Activated naive CD4-positive, alpha-beta T cell treated with anti-CD3 and anti-CD28 coated beads for 36 hours (primary cell): ENCODE measurements at regions of chr3 and their contacts with region 1.

Region 1: DNA sequence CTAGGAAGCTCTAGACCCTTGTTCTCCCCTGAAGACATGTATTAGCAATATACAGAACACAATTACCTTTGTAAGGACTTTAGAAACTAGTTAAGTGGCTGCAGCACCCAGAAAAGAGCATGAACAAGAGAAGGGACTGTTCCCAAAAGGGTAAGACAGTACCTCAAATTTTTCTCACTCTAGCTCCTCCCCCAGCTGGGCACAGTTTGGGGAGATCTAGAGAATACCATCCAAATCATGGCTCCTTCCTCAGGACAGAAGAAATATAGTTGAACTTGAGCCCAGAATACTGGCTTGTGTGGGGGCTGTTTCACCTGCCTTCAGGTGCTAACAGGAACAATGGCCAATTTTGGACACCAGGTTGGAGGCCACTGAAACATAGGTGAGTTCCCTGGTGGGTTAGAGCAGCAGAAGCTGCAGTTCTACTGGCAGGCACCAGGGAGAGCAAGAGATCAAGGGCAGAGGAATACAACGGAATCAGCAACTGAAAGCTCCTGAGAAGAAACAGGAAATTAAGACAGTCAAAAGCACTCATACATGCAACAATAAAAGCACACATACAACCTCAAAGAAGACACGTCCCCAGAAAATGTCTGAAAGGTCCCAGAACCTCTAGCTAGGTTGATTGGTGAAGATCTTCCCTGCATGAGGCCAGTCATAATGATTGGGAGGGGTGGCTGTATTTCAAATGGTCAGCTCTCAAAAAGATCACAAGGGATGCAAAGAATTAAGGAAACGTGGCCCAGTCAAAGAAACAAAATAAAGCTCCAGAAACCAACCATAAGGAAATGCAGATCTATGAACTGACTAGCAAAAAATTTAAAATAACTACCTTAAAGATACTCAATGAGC is 104.9 kb upstream of the ASB14 start:
- DNase-seq: peak; percentile 77
- H3K4me3 Mint-ChIP-seq: no peak overlapping the region
- H3K27ac Mint-ChIP-seq: peak overlapping the region; percentile 20
- H3K4me1 Mint-ChIP-seq: peaks cover 11% of the 10 kb centered on the region
- H3K27me3 Mint-ChIP-seq: no peaks in the 10 kb centered on the region

Region 2: DNA sequence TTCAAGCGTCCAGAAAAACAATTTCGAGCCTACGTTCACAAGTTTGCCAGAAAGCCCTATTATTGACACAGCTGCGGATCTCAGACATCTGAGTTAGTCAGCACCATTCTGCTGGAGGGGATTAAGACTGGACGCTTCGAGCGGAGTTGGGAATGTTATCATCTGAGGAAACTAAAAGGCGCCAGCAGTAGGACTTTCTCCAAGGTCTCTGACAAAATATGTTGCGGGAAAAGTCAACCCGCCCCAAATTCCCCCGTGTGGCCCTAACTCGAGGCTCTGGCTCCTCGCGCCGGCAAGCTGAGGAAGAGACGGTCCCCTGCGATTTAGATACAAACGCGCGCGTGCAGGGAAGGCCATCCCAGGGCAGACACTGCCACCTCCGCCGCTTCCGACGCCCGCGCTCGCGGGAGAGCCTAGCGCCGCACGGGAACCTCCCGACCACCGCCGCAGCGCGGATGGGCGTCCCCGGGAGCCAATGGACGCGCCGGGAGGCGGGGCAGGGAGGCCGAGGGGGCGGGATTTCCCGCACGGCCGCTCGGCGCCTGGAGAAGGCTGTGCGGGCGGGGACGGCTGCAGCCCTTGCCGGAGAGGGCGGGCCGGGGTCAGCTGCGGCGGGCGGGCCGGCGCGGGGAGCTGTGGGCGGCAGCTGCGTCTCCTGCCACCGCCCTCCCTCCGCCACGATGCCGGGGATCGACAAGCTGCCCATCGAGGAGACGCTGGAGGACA is 170.0 kb before region 1 on chr3 and contains the start of gene APPL1:
- CTCF ChIA-PET with region 1: no interaction called
- intact Hi-C with region 1: loop called (anchors 2 kb)
- DNase-seq: peak; percentile 93
- H3K4me3 Mint-ChIP-seq: peak within 1 kb of the TSS; percentile 88
- H3K27ac Mint-ChIP-seq: peak within 1 kb of the TSS; percentile 63
- H3K4me1 Mint-ChIP-seq: peaks cover 26% of the 10 kb centered on the region
- H3K27me3 Mint-ChIP-seq: no peaks in the 10 kb centered on the region
- total RNA-seq, gene APPL1: 30.8 to 35.1 TPM

Region 3: GRCh38 chr3:57582474-57583168 is 185.2 kb after region 1 on chr3:
- CTCF ChIA-PET with region 1: interaction called, 8 read pairs
- intact Hi-C with region 1: loop called (anchors 1 kb)
- DNase-seq: no peak
- H3K4me3 Mint-ChIP-seq: no peak overlapping the region
- H3K27ac Mint-ChIP-seq: peak overlapping the region; percentile 39
- H3K4me1 Mint-ChIP-seq: peaks cover 29% of the 10 kb centered on the region
- H3K27me3 Mint-ChIP-seq: no peaks in the 10 kb centered on the region

Region 4: GRCh38 chr3:57826245-57826951 is 429.0 kb after region 1 on chr3:
- CTCF ChIA-PET with region 1: interaction called, 7 read pairs
- intact Hi-C with region 1: loop called (anchors 1 kb)
- DNase-seq: no peak
- H3K4me3 Mint-ChIP-seq: no peak overlapping the region
- H3K27ac Mint-ChIP-seq: no peak overlapping the region
- H3K4me1 Mint-ChIP-seq: peaks cover 19% of the 10 kb centered on the region
- H3K27me3 Mint-ChIP-seq: no peaks in the 10 kb centered on the region

Region 5: GRCh38 chr3:57910988-57911387 is 513.6 kb after region 1 on chr3:
- CTCF ChIA-PET with region 1: no interaction called
- intact Hi-C with region 1: loop called (anchors 1 kb)
- DNase-seq: peak; percentile 27
- H3K4me3 Mint-ChIP-seq: no peak overlapping the region
- H3K27ac Mint-ChIP-seq: no peak overlapping the region
- H3K4me1 Mint-ChIP-seq: no peaks in the 10 kb centered on the region
- H3K27me3 Mint-ChIP-seq: no peaks in the 10 kb centered on the region

Region 6: GRCh38 chr3:57961828-57962447 is 564.5 kb after region 1 on chr3:
- CTCF ChIA-PET with region 1: no interaction called
- intact Hi-C with region 1: no loop called
- DNase-seq: no peak
- H3K4me3 Mint-ChIP-seq: no peak overlapping the region
- H3K27ac Mint-ChIP-seq: no peak overlapping the region
- H3K4me1 Mint-ChIP-seq: peaks cover 7% of the 10 kb centered on the region
- H3K27me3 Mint-ChIP-seq: no peaks in the 10 kb centered on the region